ENCODE measurements at regions of chr19 and their contacts with region 1.

Region 1: GRCh38 chr19:41353466-41354342 is at the start of gene TGFB1:
- DNase-seq: peak; percentile 95
- ATAC-seq: peak; percentile 58
- H3K4me3 Mint-ChIP-seq: peak within 1 kb of the TSS; percentile 99
- H3K27ac Mint-ChIP-seq: peak within 1 kb of the TSS; percentile 93
- H3K4me1 Mint-ChIP-seq: peaks cover 59% of the 10 kb centered on the region
- H3K27me3 Mint-ChIP-seq: no peaks in the 10 kb centered on the region
- total RNA-seq, gene TGFB1: 171 to 179 TPM

Region 2: GRCh38 chr19:41206926-41207750 is 146.6 kb before region 1 on chr19:
- CTCF ChIA-PET with region 1: interaction called, 17 read pairs
- DNase-seq: no peak
- ATAC-seq: no peak
- H3K4me3 Mint-ChIP-seq: no peak overlapping the region
- H3K27ac Mint-ChIP-seq: no peak overlapping the region
- H3K4me1 Mint-ChIP-seq: peaks cover 11% of the 10 kb centered on the region
- H3K27me3 Mint-ChIP-seq: peaks cover 2% of the 10 kb centered on the region

Region 3: DNA sequence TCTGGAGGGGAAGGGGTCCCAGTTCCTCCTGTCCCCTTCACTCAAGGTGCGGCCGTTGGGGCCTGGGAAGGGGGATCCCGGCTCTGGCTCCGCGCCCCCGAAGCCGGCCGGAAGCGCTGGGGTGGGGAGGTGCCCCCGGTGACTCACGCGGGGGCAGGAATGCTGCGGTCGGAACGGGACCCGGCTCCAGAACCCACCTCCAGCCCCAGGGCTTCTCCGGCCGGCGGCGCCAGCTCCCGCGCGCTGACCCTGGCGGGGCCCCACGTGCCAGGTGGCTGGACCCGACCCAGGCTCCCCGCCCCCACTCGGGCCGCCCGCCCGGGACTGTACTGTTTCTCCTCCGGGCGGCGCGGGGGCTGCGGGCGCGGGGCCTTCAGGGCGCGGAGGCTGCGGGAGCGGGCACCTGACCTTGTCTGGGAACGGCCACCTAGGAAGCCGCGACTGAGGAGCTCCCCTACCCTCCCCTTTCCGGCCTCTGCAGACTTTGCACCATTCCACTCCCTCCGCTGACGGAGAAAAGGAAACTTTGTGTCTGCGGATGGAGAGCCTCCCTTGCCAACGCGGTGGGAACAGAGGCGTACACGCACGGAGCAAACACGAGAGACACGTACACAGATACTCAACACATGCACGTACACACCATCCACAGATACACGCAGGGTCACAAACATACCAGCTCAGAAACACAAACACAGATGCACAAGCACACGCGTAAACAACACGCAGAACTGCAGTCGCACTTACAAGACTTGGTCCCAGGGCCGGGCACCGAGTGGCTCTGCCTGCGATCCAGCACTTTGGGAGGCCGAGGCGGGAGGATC is 127.4 kb before region 1 on chr19:
- CTCF ChIA-PET with region 1: no interaction called
- DNase-seq: peak; percentile 50
- ATAC-seq: peak; percentile 63
- H3K4me3 Mint-ChIP-seq: peak overlapping the region; percentile 74
- H3K27ac Mint-ChIP-seq: no peak overlapping the region
- H3K4me1 Mint-ChIP-seq: peaks cover 17% of the 10 kb centered on the region
- H3K27me3 Mint-ChIP-seq: peaks cover 19% of the 10 kb centered on the region

Region 4: DNA sequence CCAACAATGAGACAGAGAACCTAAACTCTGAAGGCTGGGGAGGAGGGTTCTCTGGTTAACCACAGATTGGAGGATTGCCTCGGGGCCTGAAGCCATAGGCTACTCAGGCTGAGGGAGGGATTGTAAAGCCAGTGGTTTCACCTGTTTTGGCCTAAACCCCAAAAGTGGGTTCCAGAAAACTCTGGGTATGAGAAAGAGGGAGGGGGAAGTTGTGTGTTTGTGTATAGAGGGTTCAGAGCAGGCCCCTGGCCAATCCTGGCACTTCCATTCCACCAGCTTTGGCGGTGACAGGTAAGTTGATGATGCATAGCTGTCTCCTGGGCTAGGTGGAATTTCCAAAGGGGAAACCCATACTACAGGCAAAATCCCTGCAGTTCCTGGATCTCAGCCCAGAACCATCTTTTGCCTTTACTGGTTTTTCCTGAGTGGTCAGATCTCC is 57.3 kb before region 1 on chr19:
- CTCF ChIA-PET with region 1: no interaction called
- DNase-seq: no peak
- ATAC-seq: no peak
- H3K4me3 Mint-ChIP-seq: no peak overlapping the region
- H3K27ac Mint-ChIP-seq: peak overlapping the region; percentile 82
- H3K4me1 Mint-ChIP-seq: peaks cover 78% of the 10 kb centered on the region
- H3K27me3 Mint-ChIP-seq: no peaks in the 10 kb centered on the region

Region 5: GRCh38 chr19:41310033-41310758 is 43.5 kb before region 1 on chr19 and contains the start of gene CCDC97:
- CTCF ChIA-PET with region 1: interaction called, 15 read pairs
- DNase-seq: peak; percentile 93
- ATAC-seq: peak; percentile 72
- H3K4me3 Mint-ChIP-seq: peak within 1 kb of the TSS; percentile 95
- H3K27ac Mint-ChIP-seq: peak within 1 kb of the TSS; percentile 94
- H3K4me1 Mint-ChIP-seq: peaks cover 69% of the 10 kb centered on the region
- H3K27me3 Mint-ChIP-seq: no peaks in the 10 kb centered on the region
- total RNA-seq, gene CCDC97: 42.9 to 43.5 TPM

Region 6: DNA sequence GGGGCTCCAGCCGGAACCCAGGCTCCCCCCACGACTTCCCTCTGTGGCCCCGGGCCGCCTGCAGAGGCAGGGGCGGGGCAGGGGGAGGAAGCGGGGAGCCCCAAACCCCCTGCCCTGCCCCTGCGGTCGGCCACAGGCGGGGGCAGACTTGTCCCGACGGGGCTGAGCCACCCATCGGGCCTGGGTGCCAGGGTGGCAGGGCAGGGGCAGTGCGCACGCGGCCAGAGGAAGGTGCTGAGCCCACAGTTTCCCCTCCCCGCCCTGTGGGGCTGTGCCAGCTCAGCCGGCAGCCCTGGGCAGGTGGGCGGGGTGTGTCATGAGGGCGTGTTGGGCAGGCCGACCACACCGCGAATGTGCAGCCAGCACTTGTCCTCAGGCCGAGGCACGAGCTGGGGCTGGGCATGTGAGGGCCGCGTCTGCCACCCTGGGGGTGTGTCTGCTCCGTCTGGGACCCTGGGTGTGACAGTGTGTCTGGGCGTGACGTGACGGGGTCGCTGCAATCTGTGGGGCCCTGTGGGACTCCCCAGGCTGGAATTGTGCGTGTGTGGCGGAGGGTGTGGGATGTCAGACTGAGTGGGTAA is 26.0 kb before region 1 on chr19:
- CTCF ChIA-PET with region 1: interaction called, 37 read pairs
- DNase-seq: peak; percentile 90
- ATAC-seq: peak; percentile 73
- H3K4me3 Mint-ChIP-seq: peak overlapping the region; percentile 67
- H3K27ac Mint-ChIP-seq: peak overlapping the region; percentile 91
- H3K4me1 Mint-ChIP-seq: peaks cover 61% of the 10 kb centered on the region
- H3K27me3 Mint-ChIP-seq: no peaks in the 10 kb centered on the region

Region 7: GRCh38 chr19:41363753-41364523 is 10.2 kb after region 1 on chr19 and contains the start of gene B9D2:
- CTCF ChIA-PET with region 1: interaction called, 51 read pairs
- DNase-seq: peak; percentile 99
- ATAC-seq: peak; percentile 95
- H3K4me3 Mint-ChIP-seq: peak within 1 kb of the TSS; percentile 90
- H3K27ac Mint-ChIP-seq: peak within 1 kb of the TSS; percentile 95
- H3K4me1 Mint-ChIP-seq: peaks cover 27% of the 10 kb centered on the region
- H3K27me3 Mint-ChIP-seq: no peaks in the 10 kb centered on the region
- total RNA-seq, gene B9D2: 8.2 to 9.3 TPM

Region 8: DNA sequence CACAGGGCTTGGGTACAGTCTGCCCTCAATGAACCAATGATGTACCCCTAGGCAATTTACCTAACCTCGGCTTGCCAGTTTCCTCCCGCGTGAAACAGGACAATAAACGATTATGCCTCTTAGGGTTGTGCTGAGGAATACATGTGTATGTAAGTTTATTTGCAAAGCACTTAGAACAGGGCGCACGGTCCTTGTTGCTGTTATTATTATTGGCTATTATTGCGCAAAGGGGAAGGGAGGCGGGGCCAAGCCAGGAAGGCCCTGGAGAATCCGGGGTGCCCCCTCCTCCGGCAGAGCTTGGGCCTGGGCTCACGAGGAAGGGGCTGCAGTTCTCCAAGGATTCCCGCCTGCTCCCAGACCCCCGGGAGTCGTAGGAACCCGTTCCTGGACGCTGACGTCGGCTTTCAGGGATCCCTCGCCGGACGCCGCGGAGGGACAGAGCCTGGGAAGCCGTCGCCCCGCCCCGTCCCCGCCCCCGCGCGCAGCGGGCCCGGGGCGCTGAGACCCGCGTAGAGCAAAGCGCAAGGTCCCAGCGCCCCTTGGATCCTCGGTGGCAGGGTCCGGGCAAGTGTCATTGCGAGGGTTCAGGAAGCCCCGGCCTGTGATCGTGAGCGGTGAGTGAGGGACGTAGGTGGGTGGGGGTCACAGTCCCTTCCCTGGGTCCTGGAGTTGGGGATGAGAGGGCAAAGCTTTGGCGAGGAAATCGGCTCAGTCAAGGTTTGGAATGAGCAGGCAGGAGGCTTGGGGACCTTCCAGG is 22.7 kb after region 1 on chr19 and contains the start of gene TMEM91:
- CTCF ChIA-PET with region 1: no interaction called
- DNase-seq: no peak
- ATAC-seq: peak; percentile 47
- H3K4me3 Mint-ChIP-seq: peak within 1 kb of the TSS; percentile 51
- H3K27ac Mint-ChIP-seq: no peak within 1 kb of the TSS
- H3K4me1 Mint-ChIP-seq: peaks cover 11% of the 10 kb centered on the region
- H3K27me3 Mint-ChIP-seq: no peaks in the 10 kb centered on the region
- total RNA-seq, gene TMEM91: 4.8 to 6.0 TPM

Measured in activated CD8-positive, alpha-beta memory T cell treated with anti-CD3 and anti-CD28 coated beads, Interleukin-2, amount 10 ng/mL, durations not matched to agents 7 days and 5 days (primary cell).